Head of caudate nucleus (tissue), 42 donors: ENCODE measurements at regions of chr13 and their contacts with region 1.

Region 1: GRCh38 chr13:51583875-51584730 is at the start of gene WDFY2:
- DNase-seq: peak; percentile 98 to 100 (median 99)

Region 2: GRCh38 chr13:51452361-51453206 is 131.5 kb before region 1 on chr13 and contains the start of gene INTS6:
- intact Hi-C with region 1: loop called (anchors 1 kb)
- DNase-seq: peak in 39 of 42 donors; percentile 29 to 100 (median 100)

Region 3: GRCh38 chr13:51674279-51674678 is 90.2 kb after region 1 on chr13:
- intact Hi-C with region 1: no loop called
- DNase-seq: peak in 1 of 42 donors; percentile 11

Region 4: GRCh38 chr13:51689663-51689996 is 105.5 kb after region 1 on chr13:
- intact Hi-C with region 1: loop called (anchors 5 kb)
- DNase-seq: peak in 18 of 42 donors; percentile 6 to 80 (median 44)

Region 5: DNA sequence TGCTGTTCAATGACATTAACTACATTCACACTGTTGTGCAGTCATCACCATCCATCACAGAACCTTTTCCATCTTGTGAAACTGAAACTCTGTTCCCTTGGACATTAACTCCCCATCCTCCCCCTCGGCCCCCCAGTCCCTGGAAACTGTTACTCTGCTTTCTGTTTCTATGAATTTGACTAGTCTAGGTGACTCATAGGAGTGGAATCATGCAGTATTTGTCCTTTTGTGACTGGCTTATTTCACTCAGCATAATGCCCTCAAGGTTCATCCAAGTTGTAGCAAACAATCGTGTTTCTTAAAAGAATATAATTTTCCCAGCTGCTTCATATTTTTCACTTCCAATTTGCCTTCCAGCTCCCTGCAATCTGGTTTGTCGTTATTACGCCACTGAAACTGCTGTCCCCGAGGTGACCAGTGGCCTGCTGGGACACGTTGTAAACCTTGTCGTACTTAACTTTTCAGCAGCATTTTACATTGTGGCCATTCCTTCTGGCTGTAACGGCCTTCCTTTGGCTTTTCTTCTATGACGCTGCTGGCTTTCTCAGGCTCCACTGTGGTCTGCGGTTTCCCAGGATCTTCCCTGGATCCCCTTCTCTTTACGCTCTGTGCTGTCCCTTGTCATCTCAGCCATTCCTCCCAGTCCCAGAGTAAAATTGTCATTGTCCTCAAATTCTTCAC is 145.9 kb after region 1 on chr13:
- intact Hi-C with region 1: loop called (anchors 10 kb)
- DNase-seq: no peak

Region 6: GRCh38 chr13:51803422-51804294 is 219.6 kb after region 1 on chr13 and contains the start of gene DHRS12:
- intact Hi-C with region 1: loop called (anchors 5 kb)
- DNase-seq: peak; percentile 79 to 97 (median 93)

Region 7: DNA sequence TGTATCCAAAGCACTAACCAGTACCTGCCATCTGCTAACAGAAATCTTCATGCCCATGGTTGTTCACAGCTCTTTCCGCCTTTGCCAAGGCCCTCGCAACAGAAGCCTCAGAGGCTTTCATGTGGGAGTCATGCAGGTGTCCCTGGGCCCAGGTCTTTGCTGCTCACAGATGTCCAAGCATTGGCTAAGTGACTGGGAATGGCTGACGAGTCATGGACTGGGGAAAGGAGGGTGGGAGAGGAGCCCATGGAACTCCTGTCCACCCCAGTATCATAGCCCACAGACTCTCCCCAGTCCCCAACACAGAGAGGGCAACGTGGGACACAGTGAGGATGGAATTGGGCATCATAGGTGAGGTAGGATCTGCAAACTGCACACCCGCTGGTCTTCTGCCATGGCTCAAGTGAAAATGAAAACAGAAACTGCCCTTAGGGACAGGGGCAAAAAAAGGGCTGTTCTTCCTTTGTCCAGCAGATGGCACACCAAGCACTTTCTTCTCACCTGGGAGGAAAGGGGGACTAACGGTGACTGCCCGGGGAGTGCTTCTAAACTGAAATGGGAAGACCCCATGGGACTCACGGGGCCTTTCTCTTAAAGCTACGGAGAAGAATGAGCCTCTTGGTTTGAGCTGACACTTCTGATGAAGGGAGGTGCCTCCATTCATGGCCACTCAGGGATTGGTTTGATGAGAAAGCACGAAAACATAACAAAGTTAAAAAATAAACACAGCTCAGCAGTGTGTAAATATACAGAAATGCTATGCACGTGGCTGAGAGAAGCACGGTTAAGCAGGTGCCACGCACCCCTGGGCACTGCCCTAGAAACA is 230.9 kb after region 1 on chr13:
- intact Hi-C with region 1: no loop called
- DNase-seq: peak in 36 of 42 donors; percentile 9 to 86 (median 62)